ENCODE measurements at regions of chr5 and their contacts with region 1.

Region 1: DNA sequence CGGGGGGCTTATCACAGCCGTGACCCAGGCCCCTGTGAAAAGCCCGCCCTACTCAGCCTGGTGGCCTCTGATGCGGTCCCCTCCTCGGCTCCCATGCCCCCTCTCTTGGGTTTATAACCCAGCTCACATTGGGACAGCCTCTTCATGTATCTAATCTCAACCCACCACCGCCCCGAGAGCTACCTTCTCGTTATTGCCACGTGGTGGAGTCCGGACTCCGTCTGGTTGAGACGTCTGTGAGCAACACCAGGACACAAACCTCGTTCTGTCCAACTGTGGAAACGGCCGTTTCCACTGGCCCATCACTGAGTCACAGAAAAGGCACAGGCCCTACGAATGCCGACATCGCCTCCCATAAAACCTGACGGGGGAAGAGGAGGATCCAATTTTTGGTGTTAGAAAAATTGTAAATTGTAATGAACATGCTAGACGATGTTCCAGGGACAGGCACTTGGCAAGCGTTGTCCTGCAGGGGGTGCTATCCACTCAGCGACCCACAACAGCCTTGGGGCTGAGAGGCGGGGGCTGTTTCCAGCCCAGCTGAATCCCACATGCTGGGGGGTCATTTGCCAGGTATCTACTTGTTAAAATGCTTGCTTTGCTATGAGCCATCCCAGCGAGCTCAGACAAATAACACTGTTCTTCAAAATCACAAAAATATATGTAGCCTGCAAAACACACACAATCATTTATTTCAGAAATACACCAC is 37.3 kb upstream of the N4BP3 start:
- ATAC-seq: peak; percentile 78 to 94 (median 90)
- H3K4me3 ChIP-seq: peak overlapping the region in 2 of 5 donors; percentile 10 to 12
- H3K27ac ChIP-seq: no peak overlapping the region
- H3K4me1 ChIP-seq: peaks cover 0 to 4% of the 10 kb centered on the region in 2 donors

Region 2: DNA sequence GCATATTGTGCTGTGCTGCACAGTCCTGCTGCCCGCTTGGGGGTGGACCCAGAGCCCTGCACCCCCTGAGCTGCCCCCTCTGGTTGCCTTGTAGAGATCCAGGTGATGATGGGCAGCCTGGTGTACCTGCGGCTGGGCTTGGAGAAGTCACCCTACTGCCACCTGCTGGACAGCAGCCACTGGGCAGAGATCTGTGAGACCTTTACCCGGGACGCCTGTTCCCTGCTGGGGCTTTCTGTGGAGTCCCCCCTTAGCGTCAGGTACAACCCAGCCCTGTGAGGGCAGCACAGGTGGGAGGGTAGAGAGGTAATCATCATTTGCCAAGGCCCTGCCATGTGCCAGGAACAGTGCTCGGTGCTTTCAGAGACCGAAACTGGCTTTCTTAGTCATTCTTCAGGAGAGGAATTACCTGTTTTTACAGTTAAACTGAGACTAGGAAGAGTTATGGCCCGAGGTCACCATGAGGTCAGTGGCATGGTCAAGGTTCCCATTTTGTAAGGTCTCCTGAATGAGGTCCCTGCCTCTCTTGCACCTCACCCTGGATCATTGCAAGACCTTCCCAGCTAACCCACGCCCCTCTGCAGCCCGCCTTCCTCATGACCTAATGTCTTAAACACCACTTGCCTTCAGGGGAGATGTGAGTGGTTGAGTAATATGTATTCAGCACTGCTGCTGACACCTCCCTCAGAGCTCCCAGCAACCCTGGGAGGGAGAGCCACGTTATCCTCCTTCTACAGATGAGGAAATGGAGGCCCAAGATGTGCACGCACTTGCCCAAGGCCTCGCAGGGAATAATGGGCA is 70.2 kb after region 1 on chr5:
- in situ Hi-C with region 1: loop called in 5 of 9 experiments (anchors 10 to 25 kb)
- ATAC-seq: peak; percentile 64 to 90 (median 72)
- H3K4me3 ChIP-seq: no peak overlapping the region
- H3K27ac ChIP-seq: no peak overlapping the region
- H3K4me1 ChIP-seq: no peaks in the 10 kb centered on the region

Region 3: DNA sequence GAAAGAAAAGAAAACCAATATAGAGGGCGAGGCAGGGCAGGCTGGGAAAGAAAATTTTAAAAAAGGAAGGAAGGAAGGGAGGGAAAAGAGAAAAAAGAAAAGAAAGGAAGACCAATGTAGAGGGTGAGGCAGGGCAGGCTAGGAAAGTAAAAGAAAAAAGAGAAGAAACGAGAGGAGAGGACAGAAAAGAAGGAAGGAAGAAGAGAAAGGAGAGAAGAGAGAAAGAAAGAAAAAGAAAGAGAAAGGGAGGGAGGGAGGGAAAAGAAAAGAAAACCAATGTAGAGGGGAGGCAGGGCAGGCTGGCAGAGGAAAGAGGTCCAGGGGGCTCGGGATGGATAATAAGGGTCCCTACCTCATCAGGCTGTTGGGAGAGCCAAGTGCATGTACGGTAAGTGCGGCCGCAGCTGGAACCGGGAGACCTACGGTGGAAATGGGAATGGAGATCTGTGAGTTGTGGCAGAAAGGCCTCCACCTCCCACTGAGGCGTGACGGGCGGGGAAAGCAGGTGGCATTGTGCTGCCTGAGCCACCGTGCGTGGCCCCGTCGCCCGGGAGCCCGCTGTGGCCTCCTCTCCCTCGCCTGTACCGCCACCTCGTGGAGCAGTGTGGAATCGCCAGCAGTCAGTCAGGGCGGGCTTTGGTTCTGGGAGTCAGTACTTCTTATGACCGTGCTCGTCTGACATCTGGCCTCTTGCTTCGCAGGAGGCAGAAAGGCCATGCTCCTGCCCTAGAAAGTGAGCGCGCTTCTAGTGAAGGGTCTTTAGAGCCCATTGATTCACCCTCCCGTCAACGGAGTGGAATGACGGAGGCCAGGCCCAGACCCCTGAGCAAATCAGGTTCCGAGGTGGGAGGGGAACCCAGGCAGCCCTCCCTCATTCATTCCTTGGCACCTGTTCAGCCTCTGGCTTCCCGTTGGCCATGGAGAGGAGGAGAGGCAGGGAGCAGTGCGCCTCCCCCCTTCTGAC is 88.1 kb after region 1 on chr5:
- in situ Hi-C with region 1: loop called in 6 of 9 experiments (anchors 10 to 25 kb)
- ATAC-seq: peak; percentile 96 to 100 (median 98)
- H3K4me3 ChIP-seq: peak overlapping the region; percentile 6 to 22 (median 16)
- H3K27ac ChIP-seq: no peak overlapping the region
- H3K4me1 ChIP-seq: no peaks in the 10 kb centered on the region

Region 4: GRCh38 chr5:178793151-178793550 is 717.2 kb after region 1 on chr5:
- in situ Hi-C with region 1: no loop called
- ATAC-seq: peak in 1 of 8 experiments; percentile 57
- H3K4me3 ChIP-seq: no peak overlapping the region
- H3K27ac ChIP-seq: no peak overlapping the region
- H3K4me1 ChIP-seq: no peaks in the 10 kb centered on the region

Measured in motor neuron (in vitro differentiated cells).